Colonic mucosa (tissue), 4 donors: ENCODE measurements at regions of chr6 and their contacts with region 1.

Region 1: GRCh38 chr6:1381481-1382330 is 7.7 kb upstream of the FOXF2 start:
- DNase-seq: peak; percentile 61
- H3K4me3 ChIP-seq: no peak overlapping the region
- H3K27ac ChIP-seq: peak overlapping the region; percentile 66
- H3K4me1 ChIP-seq: peaks cover 3% of the 10 kb centered on the region
- H3K27me3 ChIP-seq: peaks cover 99% of the 10 kb centered on the region
- CTCF ChIP-seq: peak; percentile 77

Region 2: GRCh38 chr6:722077-722524 is 659.6 kb before region 1 on chr6:
- intact Hi-C with region 1: loop called (anchors 2 kb)
- DNase-seq: peak; percentile 79
- H3K4me3 ChIP-seq: no peak overlapping the region
- H3K27ac ChIP-seq: no peak overlapping the region
- H3K4me1 ChIP-seq: no peaks in the 10 kb centered on the region
- H3K27me3 ChIP-seq: peaks cover 2% of the 10 kb centered on the region
- CTCF ChIP-seq: peak; percentile 90

Region 3: DNA sequence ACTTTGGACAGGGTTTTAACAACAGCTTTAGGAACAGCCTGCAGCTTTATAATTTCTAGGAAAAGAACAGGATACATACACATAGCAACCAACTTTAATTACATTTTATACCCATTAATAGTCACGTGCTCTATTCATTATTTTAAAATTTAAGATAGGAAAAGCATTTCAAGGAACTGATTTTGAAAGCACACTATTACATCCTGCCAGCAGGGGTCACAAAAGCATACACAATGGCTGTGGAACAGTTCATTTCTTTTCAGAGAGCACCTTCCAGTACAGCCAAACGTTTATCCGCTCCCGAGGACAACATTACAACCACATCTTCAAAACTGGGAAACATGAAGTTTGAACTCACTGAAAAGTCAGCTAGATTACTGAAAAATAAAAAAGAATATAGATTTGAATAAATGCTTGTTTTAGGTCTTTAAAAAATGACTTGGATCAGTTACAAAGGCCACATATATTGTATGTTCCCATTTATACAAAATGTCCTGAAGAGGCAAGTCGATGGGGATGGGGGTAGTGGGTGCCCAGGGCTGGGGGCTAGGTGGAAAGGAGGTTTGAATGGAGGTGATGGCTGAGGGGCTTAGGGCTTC is 584.1 kb before region 1 on chr6:
- intact Hi-C with region 1: loop called (anchors 5 kb)
- DNase-seq: peak; percentile 60
- H3K4me3 ChIP-seq: no peak overlapping the region
- H3K27ac ChIP-seq: no peak overlapping the region
- H3K4me1 ChIP-seq: no peaks in the 10 kb centered on the region
- H3K27me3 ChIP-seq: no peaks in the 10 kb centered on the region
- CTCF ChIP-seq: peak; percentile 61